ENCODE measurements at regions of chr12 and their contacts with region 1.

Region 1: DNA sequence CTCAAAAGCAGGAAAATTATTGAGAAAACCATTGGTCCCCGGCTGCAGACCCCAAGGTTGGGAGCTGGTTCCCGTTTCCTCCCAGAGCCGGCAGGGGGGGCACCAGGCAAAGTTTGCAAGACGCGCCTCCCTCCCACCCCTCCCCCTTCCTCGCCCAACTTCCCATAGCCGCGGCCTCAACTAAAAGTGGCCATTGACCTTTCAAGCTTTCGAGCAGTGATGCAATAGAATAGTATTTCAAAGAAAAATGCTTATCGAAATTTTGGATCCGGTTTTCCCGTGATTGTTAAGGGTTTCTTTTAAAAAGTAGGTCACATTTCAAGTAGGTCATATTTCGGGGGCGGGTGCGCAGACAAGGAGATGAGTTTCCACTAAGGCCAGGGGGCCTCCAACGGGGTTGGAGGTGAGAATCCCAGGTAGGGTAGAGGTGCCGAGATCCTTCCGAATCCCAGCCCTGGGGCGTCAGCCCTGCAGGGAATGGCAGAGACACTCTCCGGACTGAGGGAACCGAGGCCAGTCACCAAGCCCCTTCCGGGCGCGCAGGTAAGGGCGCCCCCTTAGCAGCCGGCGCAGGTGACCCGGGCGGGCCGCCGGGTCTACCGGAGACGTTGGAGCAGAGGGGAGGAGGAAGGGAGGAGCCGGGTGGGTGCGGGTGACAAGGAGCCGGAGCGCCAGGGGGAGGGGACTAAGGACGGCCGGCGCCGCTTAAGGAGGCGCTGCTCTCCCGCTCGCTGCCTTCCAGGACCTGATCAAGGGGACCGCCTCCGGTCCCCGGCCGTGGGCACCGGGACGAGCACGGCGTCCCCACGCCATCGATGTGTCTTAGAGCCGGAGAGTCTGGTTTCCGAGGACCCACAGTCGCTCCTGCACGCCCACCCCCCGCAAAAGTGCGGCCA is 2.6 kb upstream of the SOCS2 start:
- DNase-seq: peak; percentile 71 to 73
- ATAC-seq: peak; percentile 77 to 81
- H3K4me3 ChIP-seq: peak overlapping the region; percentile 77 to 96 (median 85)
- H3K27ac ChIP-seq: peak overlapping the region; percentile 76 to 89 (median 83)
- H3K4me1 ChIP-seq: peaks cover 5 to 28% of the 10 kb centered on the region in 2 donors
- H3K27me3 ChIP-seq: peaks cover 11 to 28% (median 18%) of the 10 kb centered on the region in 3 donors
- CTCF ChIP-seq: peak; percentile 74 to 92 (median 82)
- POLR2A ChIP-seq: no peak

Region 2: GRCh38 chr12:93502802-93503623 is 66.9 kb before region 1 on chr12:
- in situ Hi-C with region 1: no loop called
- intact Hi-C with region 1: loop called (anchors 10 kb)
- DNase-seq: no peak
- ATAC-seq: no peak
- H3K4me3 ChIP-seq: no peak overlapping the region
- H3K27ac ChIP-seq: no peak overlapping the region
- H3K4me1 ChIP-seq: no peaks in the 10 kb centered on the region
- H3K27me3 ChIP-seq: no peaks in the 10 kb centered on the region
- CTCF ChIP-seq: peak; percentile 49 to 79 (median 71)
- POLR2A ChIP-seq: no peak

Region 3: DNA sequence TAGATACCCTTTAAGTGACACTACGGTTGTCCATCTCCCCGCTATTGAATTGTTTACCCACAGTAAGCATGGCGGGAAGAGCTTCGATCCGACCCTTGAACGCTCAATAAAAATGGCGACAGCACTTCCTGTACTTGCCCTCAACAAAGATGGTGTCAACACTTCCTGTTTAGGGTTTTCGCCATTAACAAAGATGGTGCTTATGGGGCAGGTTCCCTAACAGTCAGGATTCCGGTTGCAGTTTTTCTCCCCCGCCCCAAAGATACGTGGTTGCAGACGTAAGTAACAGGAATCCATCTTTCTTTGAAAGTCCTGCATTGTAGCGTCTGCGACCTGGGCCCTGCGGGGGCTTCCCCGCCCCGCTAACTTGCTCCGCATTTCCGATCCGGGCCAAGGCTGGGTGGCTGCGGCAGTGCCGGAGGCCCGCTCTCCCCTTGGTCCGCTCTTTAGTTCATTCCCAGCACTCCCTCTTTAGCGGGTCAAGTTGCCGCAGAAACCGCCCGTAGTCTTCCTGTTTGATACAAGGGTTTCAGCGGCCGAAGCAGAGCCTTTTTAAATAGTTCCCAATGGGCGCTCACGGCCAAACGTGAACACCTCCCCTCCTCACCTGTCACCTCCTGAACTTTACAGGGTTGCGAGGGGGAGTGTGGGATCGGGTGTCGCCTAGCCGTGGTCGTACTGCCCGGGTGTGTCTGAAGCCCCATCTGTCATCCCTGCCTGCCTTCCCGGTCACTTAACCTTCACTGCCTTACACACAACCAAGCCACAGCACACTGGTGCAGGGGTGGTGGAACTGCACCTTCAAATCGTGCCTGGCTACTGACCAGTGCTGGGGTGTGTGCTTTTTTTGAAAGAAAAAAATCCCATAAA is 107.5 kb after region 1 on chr12 and contains the start of gene CRADD:
- in situ Hi-C with region 1: loop called in 2 of 4 experiments (anchors 10 kb)
- intact Hi-C with region 1: loop called (anchors 1 kb)
- DNase-seq: peak; percentile 78 to 84
- ATAC-seq: peak; percentile 92 to 96
- H3K4me3 ChIP-seq: peak within 1 kb of the TSS; percentile 71 to 87 (median 84)
- H3K27ac ChIP-seq: peak within 1 kb of the TSS; percentile 95 to 96 (median 96)
- H3K4me1 ChIP-seq: peaks cover 44 to 47% of the 10 kb centered on the region in 2 donors
- H3K27me3 ChIP-seq: no peaks in the 10 kb centered on the region
- CTCF ChIP-seq: no peak
- POLR2A ChIP-seq: peak; percentile 53 to 70
- total RNA-seq, gene CRADD: 19.4 to 28.7 (median 22.6) TPM

Region 4: GRCh38 chr12:93894391-93895088 is 324.6 kb after region 1 on chr12:
- in situ Hi-C with region 1: no loop called
- intact Hi-C with region 1: loop called (anchors 2 kb)
- DNase-seq: peak; percentile 91 to 96
- ATAC-seq: peak; percentile 89 to 95
- H3K4me3 ChIP-seq: peak overlapping the region; percentile 19 to 30 (median 26)
- H3K27ac ChIP-seq: peak overlapping the region; percentile 87 to 89 (median 88)
- H3K4me1 ChIP-seq: peaks cover 28% of the 10 kb centered on the region in 2 donors
- H3K27me3 ChIP-seq: no peaks in the 10 kb centered on the region
- CTCF ChIP-seq: no peak
- POLR2A ChIP-seq: peak in 1 of 2 donors; percentile 44

Region 5: DNA sequence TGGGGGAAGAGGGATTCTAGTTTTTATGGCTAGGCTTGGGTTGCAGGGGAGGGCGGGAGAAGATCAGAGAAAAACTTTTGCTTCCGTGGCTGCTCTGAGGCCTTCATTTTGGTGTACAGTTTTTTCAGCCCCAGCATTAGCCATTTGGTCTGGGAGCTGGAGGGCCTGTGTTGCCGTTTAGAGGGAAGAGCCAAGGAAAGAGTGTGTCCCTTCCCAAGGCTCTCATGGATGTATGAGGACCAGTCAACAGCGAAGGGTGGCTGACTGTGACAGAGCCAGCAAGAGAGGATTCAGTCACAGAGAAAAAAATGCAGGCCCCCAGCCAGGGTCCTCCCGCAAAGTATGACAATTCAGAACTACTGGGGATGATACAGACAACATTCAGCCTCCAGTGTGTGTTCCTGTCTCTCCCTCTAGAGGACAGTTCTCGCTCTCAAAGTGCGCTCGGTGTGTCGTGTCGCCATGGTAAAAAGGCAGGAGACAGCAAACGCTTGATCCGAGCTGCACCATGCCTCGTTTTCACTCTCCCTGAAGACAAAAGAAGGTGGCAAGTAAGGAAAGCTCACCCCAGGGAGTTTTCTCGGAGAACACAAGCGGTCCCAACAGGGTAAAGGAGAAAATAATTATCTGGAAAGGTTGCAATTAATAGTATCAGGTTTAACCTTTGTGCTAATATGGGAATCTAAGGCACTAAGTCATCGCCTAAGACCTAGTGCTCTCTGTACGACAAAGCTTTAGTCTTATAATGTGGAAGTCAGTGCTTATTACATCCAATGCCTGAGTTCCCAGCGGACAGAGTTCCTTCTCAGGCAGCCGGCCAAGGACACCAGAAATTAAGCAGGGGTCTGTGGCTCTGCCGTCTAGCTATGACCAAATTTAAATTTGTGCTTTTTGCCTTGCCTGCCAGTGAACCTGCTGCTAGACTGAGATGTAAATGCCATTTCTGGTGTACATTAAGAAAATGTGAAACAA is 421.2 kb after region 1 on chr12:
- in situ Hi-C with region 1: loop called in 2 of 4 experiments (anchors 25 kb)
- intact Hi-C with region 1: no loop called
- DNase-seq: peak; percentile 56 to 62
- ATAC-seq: peak; percentile 96 to 98
- H3K4me3 ChIP-seq: peak overlapping the region in 3 of 4 donors; percentile 5 to 42 (median 20)
- H3K27ac ChIP-seq: peak overlapping the region in 2 of 4 donors; percentile 15 to 62
- H3K4me1 ChIP-seq: peaks cover 6 to 9% of the 10 kb centered on the region in 2 donors
- H3K27me3 ChIP-seq: no peaks in the 10 kb centered on the region
- CTCF ChIP-seq: peak; percentile 29 to 69 (median 35)
- POLR2A ChIP-seq: no peak